Common myeloid progenitor, CD34-positive (primary cell): ENCODE measurements at regions of chr3 and their contacts with region 1.

Region 1: DNA sequence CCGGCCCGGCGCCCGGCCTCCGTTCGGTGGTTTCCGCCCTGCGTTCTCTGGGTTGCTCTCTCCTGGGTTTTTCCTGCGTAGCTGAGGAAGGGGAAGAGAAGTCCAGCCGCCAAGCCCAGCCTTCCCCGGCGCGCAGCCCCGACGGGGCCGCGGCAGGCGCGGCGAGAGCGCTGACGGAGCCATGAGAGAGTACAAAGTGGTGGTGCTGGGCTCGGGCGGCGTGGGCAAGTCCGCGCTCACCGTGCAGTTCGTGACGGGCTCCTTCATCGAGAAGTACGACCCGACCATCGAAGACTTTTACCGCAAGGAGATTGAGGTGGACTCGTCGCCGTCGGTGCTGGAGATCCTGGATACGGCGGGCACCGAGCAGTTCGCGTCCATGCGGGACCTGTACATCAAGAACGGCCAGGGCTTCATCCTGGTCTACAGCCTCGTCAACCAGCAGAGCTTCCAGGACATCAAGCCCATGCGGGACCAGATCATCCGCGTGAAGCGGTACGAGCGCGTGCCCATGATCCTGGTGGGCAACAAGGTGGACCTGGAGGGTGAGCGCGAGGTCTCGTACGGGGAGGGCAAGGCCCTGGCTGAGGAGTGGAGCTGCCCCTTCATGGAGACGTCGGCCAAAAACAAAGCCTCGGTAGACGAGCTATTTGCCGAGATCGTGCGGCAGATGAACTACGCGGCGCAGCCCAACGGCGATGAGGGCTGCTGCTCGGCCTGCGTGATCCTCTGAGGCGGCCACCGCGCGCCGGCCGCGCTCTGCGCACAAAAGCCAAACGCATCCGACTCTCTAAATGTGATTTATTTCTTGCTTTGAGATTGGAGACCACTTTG is 704 bp downstream of the RAP2B start:
- DNase-seq: peak in 2 of 3 donors; percentile 54 to 67
- H3K4me3 ChIP-seq: peak overlapping the region; percentile 72 to 96 (median 91)
- H3K27ac ChIP-seq: peak overlapping the region; percentile 33 to 81
- H3K4me1 ChIP-seq: peaks cover 33 to 61% (median 51%) of the 10 kb centered on the region in 4 experiments
- H3K27me3 ChIP-seq: no peaks in the 10 kb centered on the region

Region 2: DNA sequence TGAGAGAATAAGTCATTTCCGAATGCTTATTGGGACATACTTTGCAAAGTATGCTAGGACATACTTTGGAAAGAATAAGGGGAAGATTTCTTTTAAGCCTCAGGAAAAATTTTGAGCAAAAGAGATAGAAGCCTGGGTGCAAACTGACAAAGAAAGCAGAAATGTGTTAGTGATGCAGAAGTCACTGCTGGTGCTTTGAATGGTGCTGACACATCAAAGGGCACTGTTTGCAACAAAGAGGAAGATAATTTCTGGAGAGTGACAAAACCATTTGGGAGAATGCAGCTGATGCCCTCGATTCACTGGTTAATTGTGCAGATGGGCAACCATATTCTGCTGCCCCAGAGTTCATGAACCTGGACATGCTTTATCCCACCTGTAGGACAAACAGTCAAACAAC is 11.7 kb before region 1 on chr3:
- CTCF ChIA-PET with region 1: no interaction called
- POLR2A ChIA-PET with region 1: no interaction called
- DNase-seq: peak in 1 of 3 donors; percentile 23
- H3K4me3 ChIP-seq: no peak overlapping the region
- H3K27ac ChIP-seq: no peak overlapping the region
- H3K4me1 ChIP-seq: no peaks in the 10 kb centered on the region
- H3K27me3 ChIP-seq: no peaks in the 10 kb centered on the region

Region 3: DNA sequence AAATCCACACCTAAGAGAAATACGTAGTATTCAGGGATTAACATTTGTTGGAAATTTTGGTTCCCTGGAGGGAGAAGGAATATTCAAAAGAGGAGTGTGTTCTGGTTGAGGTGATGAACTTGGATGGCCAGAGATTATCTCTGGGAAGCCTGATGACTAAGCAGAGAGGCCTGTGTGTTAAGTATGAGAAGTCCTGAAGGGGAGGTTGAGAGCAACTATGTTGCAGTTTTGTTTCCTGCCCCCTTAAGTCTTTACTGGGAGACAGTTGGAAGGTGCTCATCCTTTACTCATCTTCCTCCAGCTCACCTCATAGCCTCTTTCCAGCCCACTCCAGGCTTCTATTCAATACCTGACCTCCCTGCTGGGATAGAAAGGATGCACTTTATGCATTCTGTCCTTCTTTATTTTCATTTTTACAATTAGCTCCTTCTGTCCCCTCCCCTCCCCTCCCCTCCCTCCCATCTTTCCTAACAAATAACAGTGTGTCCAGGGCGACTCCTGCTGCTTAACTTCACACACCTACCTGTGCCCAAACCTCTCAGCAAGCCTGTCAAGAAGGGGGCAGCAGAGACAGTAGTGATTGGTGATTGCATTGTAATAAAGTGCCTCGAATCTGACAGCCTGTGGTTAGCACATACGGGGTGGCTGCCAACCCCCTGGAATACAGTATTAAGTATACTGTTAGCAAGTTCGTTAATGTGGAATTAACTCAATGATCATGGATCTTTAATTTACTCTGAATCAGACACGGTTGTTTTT is 11.2 kb after region 1 on chr3:
- CTCF ChIA-PET with region 1: no interaction called
- POLR2A ChIA-PET with region 1: no interaction called
- DNase-seq: peak in 2 of 3 donors; percentile 12 to 33
- H3K4me3 ChIP-seq: no peak overlapping the region
- H3K27ac ChIP-seq: no peak overlapping the region
- H3K4me1 ChIP-seq: peaks cover 0 to 4% (median 0%) of the 10 kb centered on the region in 4 experiments
- H3K27me3 ChIP-seq: no peaks in the 10 kb centered on the region

Region 4: GRCh38 chr3:153221748-153222162 is 59.0 kb after region 1 on chr3:
- CTCF ChIA-PET with region 1: interaction called, 36 read pairs
- POLR2A ChIA-PET with region 1: interaction called, 4 read pairs
- DNase-seq: peak; percentile 99 to 100 (median 99)
- H3K4me3 ChIP-seq: peak overlapping the region in 4 of 7 experiments; percentile 21 to 55 (median 44)
- H3K27ac ChIP-seq: peak overlapping the region; percentile 84 to 97
- H3K4me1 ChIP-seq: peaks cover 8 to 29% (median 23%) of the 10 kb centered on the region in 4 experiments
- H3K27me3 ChIP-seq: no peaks in the 10 kb centered on the region